ENCODE measurements at regions of chr5 and their contacts with region 1.

Region 1: DNA sequence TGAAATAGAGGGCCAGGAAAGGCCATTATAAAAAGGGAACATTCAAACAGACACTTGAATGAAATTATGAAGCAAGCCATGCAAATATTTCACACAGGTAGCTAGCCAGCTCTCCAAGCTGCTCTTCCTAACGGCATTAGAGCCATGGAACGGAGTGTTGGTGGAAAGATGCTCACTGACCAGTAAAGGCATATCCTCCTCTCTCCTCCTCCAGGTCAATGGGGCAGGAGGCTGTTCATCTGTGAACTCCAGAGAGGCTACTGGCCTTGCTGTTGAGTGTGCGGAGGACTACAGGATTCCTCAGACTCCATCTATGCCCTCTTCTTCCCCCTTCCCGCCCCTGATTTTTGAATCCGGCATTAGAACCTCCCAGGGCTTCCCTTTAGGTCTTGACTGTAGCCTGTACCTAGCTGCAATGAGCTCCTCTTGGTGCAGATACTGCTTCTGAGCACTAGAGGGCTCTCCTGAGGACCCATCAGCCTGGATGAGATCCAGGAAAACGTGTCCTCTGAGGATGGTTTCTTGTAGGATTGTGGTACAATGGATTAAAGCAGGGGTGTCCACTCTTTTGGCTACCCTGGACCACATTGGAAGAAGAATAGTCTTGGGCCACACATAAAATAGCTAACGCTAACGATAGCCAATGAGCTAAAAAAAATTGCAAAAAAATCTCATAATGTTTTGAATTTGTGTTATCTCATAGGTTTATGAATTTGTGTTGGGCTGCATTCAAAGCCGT is 162.2 kb downstream of the SREK1 start:
- DNase-seq: peak; percentile 55
- H3K4me3 Mint-ChIP-seq: no peak overlapping the region
- H3K27ac Mint-ChIP-seq: no peak overlapping the region
- H3K4me1 Mint-ChIP-seq: no peaks in the 10 kb centered on the region
- H3K27me3 Mint-ChIP-seq: peaks cover 60% of the 10 kb centered on the region
- CTCF ChIP-seq: peak; percentile 49

Region 2: GRCh38 chr5:66171349-66172344 is 134.6 kb before region 1 on chr5:
- CTCF ChIA-PET with region 1: interaction called, 12 read pairs
- intact Hi-C with region 1: loop called (anchors 10 kb)
- DNase-seq: peak; percentile 41
- H3K4me3 Mint-ChIP-seq: no peak overlapping the region
- H3K27ac Mint-ChIP-seq: no peak overlapping the region
- H3K4me1 Mint-ChIP-seq: peaks cover 12% of the 10 kb centered on the region
- H3K27me3 Mint-ChIP-seq: no peaks in the 10 kb centered on the region
- CTCF ChIP-seq: peak; percentile 39

Region 3: DNA sequence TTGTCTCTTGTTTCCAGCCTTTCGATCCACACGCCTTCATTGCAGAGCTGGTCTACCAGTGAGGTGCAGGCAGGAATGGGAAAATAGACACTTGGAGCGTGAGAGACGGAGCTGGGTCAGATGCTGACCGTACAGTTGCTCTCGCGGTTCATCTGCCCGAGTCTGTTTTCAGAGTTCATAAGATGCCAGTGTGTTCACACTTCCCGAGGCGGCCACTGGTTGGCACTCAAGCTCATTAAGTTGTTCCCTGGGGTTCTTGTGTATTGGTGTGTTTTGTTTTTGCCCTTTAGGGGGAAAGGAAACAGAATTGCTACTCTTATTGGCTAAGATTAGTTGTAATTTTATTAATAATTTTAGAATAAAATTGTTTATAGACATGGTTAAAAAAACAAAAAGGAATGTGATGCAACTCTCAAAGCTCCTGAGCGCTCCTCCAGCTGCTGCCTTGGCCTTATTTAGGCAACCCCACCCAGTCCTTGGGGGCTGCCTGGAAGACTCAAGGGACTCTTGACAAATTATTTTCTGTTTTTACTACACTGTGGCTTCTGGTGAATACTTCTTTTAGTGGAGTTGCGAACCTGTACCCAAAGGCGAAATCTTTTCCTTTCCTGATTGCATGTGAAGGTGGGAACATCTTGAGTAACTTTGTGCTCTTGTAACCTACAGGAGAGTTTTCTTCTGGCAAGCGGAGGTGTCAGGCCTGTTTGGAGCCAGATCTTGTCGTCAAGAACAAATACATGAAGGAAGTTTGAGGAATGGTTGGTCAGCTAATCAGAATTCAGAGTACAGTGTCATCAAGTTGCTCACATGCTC is 436.0 kb after region 1 on chr5:
- CTCF ChIA-PET with region 1: interaction called, 7 read pairs
- intact Hi-C with region 1: loop called (anchors 5 kb)
- DNase-seq: peak; percentile 42
- H3K4me3 Mint-ChIP-seq: no peak overlapping the region
- H3K27ac Mint-ChIP-seq: no peak overlapping the region
- H3K4me1 Mint-ChIP-seq: peaks cover 13% of the 10 kb centered on the region
- H3K27me3 Mint-ChIP-seq: peaks cover 91% of the 10 kb centered on the region
- CTCF ChIP-seq: no peak

Region 4: DNA sequence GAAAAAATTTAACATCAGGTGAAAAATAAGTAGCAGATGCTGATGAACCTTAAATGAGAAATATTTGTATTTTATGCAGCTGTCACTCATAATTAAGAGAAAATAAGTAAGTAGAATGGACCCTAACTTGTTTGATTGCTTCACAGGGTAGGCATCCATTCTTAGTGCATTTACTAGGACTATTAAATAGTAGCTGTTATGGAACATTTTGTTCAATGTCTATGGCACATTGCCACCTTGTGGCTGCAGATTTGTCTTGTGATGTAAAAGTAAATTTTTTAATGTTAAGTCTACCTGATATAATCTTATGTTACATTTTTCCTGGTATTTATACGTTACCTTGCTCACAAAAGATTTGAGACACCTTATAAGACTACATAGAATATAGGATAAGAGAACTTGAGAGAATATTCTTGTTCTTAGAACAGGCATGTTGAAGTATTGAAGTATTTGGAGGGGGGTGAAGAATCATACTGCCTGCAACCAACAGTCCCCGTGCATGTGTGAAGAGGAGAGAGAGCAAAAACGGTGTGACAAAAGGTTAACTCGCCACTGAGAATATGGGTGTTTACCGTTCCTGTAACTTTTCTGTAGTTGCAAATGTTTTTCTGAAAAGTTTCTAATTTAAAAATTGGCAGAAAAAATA is 451.0 kb after region 1 on chr5:
- CTCF ChIA-PET with region 1: interaction called, 36 read pairs
- intact Hi-C with region 1: loop called (anchors 1 kb)
- DNase-seq: peak; percentile 45
- H3K4me3 Mint-ChIP-seq: no peak overlapping the region
- H3K27ac Mint-ChIP-seq: no peak overlapping the region
- H3K4me1 Mint-ChIP-seq: peaks cover 8% of the 10 kb centered on the region
- H3K27me3 Mint-ChIP-seq: peaks cover 62% of the 10 kb centered on the region
- CTCF ChIP-seq: peak; percentile 25

Measured in Calu3 (cell line).